Panc1 (cell line): ENCODE measurements at regions of chr13 and their contacts with region 1.

Region 1: DNA sequence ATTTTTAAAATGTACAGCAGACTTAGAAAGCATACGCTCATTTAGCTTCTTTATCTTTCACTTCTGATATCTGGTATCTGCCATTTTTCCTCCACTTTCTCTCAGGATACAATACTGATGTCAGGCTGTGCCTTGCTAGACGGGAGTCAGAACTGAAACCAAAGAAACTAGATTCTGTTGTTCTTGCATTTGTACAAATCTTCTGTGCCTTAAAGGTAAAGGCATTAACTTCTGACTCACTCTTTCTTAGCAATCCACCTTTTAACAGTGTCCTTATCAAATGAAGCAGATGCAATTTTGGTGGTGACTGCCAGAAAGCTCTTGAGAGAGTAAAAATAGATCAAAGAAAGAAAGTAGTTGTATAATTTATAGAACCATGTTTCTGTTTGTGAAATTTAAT is 370.4 kb downstream of the PCDH20 start:
- DNase-seq: no peak
- ATAC-seq: no peak
- H3K4me3 ChIP-seq: no peak overlapping the region
- H3K27ac ChIP-seq: no peak overlapping the region
- H3K4me1 ChIP-seq: no peaks in the 10 kb centered on the region
- H3K27me3 ChIP-seq: no peaks in the 10 kb centered on the region
- CTCF ChIP-seq: no peak

Region 2: DNA sequence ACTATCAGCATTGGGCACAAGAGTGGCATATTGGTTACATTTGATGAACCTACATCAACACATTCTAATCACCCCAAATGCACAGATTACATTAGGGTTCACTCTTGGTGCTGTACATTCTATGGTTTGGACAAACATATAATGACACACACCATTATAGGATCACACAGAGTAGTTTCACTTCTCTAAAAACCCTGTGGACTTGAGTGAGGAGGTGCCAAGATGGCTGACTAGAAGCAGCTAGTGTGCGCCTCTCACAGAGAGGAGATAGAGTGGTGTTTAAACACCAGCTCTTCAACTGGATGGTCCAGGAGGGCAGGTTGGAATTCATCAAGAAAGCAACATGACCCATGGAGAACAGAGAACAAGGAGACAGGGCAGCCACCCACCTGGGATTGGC is 382.7 kb before region 1 on chr13:
- CTCF ChIA-PET with region 1: no interaction called
- POLR2A ChIA-PET with region 1: interaction called, 17 read pairs
- in situ Hi-C with region 1: no loop called
- intact Hi-C with region 1: no loop called
- DNase-seq: no peak
- ATAC-seq: no peak
- H3K4me3 ChIP-seq: no peak overlapping the region
- H3K27ac ChIP-seq: no peak overlapping the region
- H3K4me1 ChIP-seq: no peaks in the 10 kb centered on the region
- H3K27me3 ChIP-seq: no peaks in the 10 kb centered on the region
- CTCF ChIP-seq: no peak

Region 3: GRCh38 chr13:60945396-60945795 is 99.9 kb before region 1 on chr13:
- CTCF ChIA-PET with region 1: no interaction called
- POLR2A ChIA-PET with region 1: no interaction called
- in situ Hi-C with region 1: no loop called
- intact Hi-C with region 1: no loop called
- DNase-seq: no peak
- ATAC-seq: no peak
- H3K4me3 ChIP-seq: no peak overlapping the region
- H3K27ac ChIP-seq: no peak overlapping the region
- H3K4me1 ChIP-seq: no peaks in the 10 kb centered on the region
- H3K27me3 ChIP-seq: no peaks in the 10 kb centered on the region
- CTCF ChIP-seq: no peak

Region 4: GRCh38 chr13:61078976-61079770 is 33.9 kb after region 1 on chr13:
- CTCF ChIA-PET with region 1: no interaction called
- POLR2A ChIA-PET with region 1: no interaction called
- in situ Hi-C with region 1: no loop called
- intact Hi-C with region 1: no loop called
- DNase-seq: no peak
- ATAC-seq: no peak
- H3K4me3 ChIP-seq: no peak overlapping the region
- H3K27ac ChIP-seq: no peak overlapping the region
- H3K4me1 ChIP-seq: no peaks in the 10 kb centered on the region
- H3K27me3 ChIP-seq: no peaks in the 10 kb centered on the region
- CTCF ChIP-seq: no peak

Region 5: DNA sequence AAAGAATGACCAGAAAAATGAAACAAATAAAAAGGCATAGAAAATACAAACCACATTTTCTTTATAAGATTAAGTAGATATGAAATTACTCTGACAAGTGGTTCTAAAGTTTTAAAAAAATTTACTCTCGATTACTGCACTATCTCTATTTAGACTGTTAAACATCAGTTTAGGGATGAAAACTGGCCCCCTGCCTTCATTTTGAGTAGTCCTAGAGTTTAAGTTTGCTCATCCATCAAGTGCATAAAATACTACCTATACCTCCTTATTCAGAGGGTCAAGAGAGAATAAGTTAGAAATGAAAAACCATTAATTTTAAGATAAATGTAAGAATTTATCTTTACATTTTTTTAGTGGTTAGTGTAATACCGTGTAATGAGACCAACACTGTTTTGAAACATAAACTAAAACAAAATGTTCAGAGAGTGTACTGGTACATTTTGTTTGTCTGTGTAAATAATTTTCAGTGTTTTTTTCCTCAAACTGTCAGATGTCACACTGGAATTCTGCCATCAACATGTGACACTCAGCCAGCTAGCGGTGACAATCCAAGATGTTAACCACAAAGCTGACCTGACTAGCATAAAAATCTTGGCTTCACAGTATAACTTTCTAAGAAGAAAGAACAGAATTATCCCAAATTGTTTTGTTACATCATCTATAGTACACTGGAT is 555.2 kb after region 1 on chr13:
- CTCF ChIA-PET with region 1: no interaction called
- POLR2A ChIA-PET with region 1: no interaction called
- in situ Hi-C with region 1: no loop called
- intact Hi-C with region 1: no loop called
- DNase-seq: no peak
- ATAC-seq: no peak
- H3K4me3 ChIP-seq: no peak overlapping the region
- H3K27ac ChIP-seq: no peak overlapping the region
- H3K4me1 ChIP-seq: no peaks in the 10 kb centered on the region
- H3K27me3 ChIP-seq: no peaks in the 10 kb centered on the region
- CTCF ChIP-seq: no peak